Breast epithelium (tissue), 4 donors: ENCODE measurements at regions of chr18 and their contacts with region 1.

Region 1: DNA sequence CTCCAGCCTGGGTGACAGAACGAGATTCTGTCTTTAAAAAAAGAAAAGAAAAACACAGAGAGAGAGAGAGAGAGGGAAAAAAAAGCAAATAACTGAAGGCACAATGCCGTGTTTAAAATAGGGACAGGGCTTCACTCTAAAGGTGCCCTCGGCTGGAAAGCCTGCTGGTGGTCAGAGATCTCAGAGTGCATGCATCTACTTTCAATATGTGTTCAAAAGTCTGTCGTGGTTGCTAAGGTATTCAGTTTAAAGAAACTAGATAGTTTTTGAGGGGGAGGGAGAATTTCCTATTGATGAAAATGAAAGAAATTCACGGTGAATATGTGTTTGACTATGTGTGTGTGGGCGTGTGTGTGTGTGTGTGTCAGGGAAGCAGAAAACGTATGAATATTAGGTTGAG is 11.0 kb upstream of the CBLN2 start:
- DNase-seq: no peak
- H3K4me3 ChIP-seq: no peak overlapping the region
- H3K27ac ChIP-seq: no peak overlapping the region
- H3K4me1 ChIP-seq: no peaks in the 10 kb centered on the region
- H3K27me3 ChIP-seq: no peaks in the 10 kb centered on the region
- CTCF ChIP-seq: no peak
- POLR2A ChIP-seq: no peak

Region 2: GRCh38 chr18:72544092-72544886 is 10.8 kb before region 1 on chr18 and contains the start of gene CBLN2:
- intact Hi-C with region 1: loop called (anchors 1 kb)
- DNase-seq: no peak
- H3K4me3 ChIP-seq: peak within 1 kb of the TSS in 2 of 3 donors; percentile 39 to 61
- H3K27ac ChIP-seq: no peak within 1 kb of the TSS
- H3K4me1 ChIP-seq: peaks cover 0 to 11% of the 10 kb centered on the region in 2 donors
- H3K27me3 ChIP-seq: peaks cover 6 to 45% of the 10 kb centered on the region in 2 donors
- CTCF ChIP-seq: peak in 2 of 3 donors; percentile 37 to 42
- POLR2A ChIP-seq: no peak
- total RNA-seq, gene CBLN2: 0.15 TPM in 1 of 3 donors, not detected in the others